Activated naive CD4-positive, alpha-beta T cell treated with anti-CD3 and anti-CD28 coated beads, Interleukin-2, amount 10 ng/mL, durations not matched to agents 7 days and 5 days (primary cell): ENCODE measurements at regions of chr12 and their contacts with region 1.

Region 1: GRCh38 chr12:55926738-55927587 is 731 bp downstream of the PYM1 start:
- DNase-seq: peak; percentile 97
- H3K4me3 Mint-ChIP-seq: peak overlapping the region; percentile 92
- H3K27ac Mint-ChIP-seq: peak overlapping the region; percentile 100
- H3K4me1 Mint-ChIP-seq: peaks cover 50% of the 10 kb centered on the region
- H3K27me3 Mint-ChIP-seq: no peaks in the 10 kb centered on the region

Region 2: GRCh38 chr12:55915482-55915859 is 11.5 kb before region 1 on chr12:
- CTCF ChIA-PET with region 1: interaction called, 13 read pairs
- DNase-seq: no peak
- H3K4me3 Mint-ChIP-seq: no peak overlapping the region
- H3K27ac Mint-ChIP-seq: peak overlapping the region; percentile 47
- H3K4me1 Mint-ChIP-seq: peaks cover 45% of the 10 kb centered on the region
- H3K27me3 Mint-ChIP-seq: no peaks in the 10 kb centered on the region

Region 3: GRCh38 chr12:55995366-55995765 is 68.4 kb after region 1 on chr12:
- CTCF ChIA-PET with region 1: no interaction called
- DNase-seq: no peak
- H3K4me3 Mint-ChIP-seq: no peak overlapping the region
- H3K27ac Mint-ChIP-seq: peak overlapping the region; percentile 11
- H3K4me1 Mint-ChIP-seq: peaks cover 35% of the 10 kb centered on the region
- H3K27me3 Mint-ChIP-seq: peaks cover 30% of the 10 kb centered on the region

Region 4: DNA sequence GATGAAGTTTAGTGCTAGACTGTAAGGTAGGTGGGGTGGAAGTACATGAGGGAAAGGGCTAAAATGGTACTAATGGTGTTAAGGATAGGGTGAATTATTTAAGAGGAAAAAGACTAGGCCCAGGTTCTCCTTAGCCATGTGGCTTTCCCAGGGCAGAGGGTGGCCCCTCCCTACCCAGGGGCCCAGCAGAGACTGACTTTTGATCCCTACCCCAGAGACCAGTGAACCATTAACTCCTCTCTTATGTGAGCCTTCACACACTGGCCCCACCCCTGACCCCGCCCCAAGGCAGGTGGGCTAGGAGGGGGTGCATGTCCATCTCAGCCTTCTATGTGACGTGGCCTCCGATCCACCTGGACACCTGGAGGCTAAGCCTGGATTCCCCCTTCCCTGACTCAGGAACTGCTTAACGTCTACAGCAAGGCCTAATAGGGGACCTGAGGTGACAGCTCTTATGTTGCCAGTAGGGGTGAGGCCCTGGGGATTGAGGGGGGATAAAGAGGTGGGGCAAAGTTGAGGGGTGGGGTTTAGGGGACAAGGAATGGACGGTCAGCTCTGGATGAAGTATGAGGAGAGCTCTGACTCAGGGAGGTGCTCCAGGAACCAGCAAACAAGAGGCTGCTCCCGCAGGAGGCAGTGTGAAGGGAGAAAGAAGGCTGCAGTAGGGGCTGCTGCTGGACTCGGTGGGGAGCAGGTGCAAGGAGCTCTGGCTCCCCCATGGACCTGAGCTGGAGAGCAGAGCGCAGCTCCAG is 303.6 kb after region 1 on chr12:
- CTCF ChIA-PET with region 1: no interaction called
- DNase-seq: no peak
- H3K4me3 Mint-ChIP-seq: no peak overlapping the region
- H3K27ac Mint-ChIP-seq: no peak overlapping the region
- H3K4me1 Mint-ChIP-seq: peaks cover 7% of the 10 kb centered on the region
- H3K27me3 Mint-ChIP-seq: no peaks in the 10 kb centered on the region